Left cardiac atrium (tissue), 4 donors: ENCODE measurements at regions of chr6 and their contacts with region 1.

Region 1: DNA sequence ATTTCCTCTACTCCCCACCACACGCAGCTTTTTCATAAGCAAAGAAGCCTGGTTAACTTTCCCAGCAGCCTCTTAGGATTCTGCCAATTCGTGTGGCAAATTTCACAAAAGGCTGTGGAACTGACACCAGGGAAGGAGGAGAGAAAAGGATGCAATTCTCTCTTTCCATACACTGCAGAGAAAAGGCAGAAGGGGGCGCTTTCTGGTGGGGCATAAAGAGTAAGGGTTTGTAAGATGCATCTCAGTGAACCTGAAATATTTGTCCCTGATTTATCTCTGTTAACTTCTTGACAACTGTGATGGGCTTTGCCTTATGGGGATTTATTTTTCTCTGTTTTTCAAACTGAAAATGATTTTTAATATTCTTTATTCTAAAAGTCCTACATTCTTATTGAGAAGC is 45.5 kb upstream of the GLP1R start:
- DNase-seq: no peak
- ATAC-seq: no peak

Region 2: GRCh38 chr6:38634518-38634917 is 368.6 kb before region 1 on chr6:
- intact Hi-C with region 1: no loop called
- DNase-seq: no peak
- ATAC-seq: peak in 1 of 2 donors; percentile 25

Region 3: DNA sequence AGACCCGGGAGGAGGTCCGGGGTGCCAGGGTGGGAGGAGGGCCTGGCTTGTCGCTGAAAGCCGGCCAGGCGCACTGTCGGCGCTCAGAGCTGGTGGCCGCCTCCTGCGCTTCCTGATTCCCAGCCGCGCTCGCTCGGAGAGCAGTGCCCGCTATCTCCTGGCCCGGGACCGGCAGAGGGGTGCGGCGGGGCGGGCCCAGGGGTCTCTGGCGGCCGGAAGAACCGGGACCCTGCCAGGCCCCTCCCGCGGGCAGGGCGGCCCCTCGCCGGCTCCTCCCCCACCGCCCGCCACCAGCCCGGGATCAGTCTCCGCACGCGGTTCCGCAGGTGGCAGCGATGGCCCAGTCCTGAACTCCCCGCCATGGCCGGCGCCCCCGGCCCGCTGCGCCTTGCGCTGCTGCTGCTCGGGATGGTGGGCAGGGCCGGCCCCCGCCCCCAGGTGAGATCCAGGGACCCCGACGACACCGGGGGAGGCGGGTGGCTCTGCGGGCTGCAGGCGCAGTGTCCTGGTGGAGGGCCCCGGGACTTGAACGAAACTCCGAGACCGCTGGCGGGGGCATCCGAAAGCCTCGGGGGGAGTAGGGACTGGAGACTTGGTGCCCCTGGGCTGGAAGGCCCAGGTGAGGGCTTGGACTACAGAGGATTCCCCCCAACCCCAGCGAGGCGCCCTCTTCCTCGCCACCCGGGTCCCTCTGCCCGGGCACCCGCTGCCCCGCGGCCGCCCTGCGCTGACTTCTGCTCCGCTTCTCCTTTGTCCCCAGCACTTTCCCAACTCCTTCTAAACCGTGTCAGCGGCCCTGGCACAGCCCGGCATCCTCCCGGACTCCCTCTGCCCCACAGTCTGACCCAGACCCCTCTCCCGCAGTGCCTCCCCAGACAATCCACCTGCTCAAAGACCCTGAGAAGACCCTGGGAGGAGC is 45.7 kb after region 1 on chr6 and contains the start of gene GLP1R:
- intact Hi-C with region 1: no loop called
- DNase-seq: no peak
- ATAC-seq: peak; percentile 60 to 73
- total RNA-seq, gene GLP1R: 4.3 to 10.3 TPM

Region 4: GRCh38 chr6:39088331-39088730 is 85.3 kb after region 1 on chr6:
- intact Hi-C with region 1: loop called in 1 of 2 experiments (anchors 5 kb)
- DNase-seq: peak; percentile 39
- ATAC-seq: peak; percentile 65 to 84

Region 5: DNA sequence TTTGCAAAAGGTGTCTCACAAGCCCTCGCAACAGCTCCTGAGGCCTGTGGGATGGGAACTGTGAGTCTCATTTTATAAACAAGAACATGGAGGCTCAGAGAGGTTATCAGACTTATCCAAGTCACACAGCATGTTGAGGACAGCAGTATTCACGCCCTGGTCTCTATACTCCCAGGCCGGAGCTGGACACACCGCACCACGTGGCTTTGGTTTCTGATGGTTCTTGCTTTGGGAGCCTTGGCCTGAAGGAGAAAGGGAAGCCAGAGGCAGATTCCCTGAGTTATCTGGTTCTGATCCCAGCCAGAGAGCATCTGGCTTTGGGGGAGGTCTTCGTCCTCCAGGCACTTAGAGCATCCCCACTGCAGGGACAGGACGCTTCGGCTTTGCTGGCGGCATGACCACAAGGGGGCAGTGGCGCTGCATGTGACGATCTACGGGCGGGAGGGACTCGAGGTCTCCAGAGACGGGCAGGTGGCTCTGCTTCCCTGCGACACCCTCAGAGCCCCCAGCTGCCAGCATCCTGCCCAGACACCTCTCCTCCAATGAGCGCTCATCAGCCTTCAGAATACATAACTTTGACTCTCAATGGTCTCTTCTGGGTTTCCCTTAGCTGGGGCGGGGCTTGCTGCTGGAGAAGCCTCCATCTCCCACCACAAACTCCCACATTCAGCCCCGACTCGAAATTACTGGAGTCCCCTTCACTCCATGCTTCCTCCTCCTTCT is 163.3 kb after region 1 on chr6:
- intact Hi-C with region 1: no loop called
- DNase-seq: peak; percentile 79
- ATAC-seq: peak; percentile 84 to 85